ENCODE measurements at regions of chr7 and their contacts with region 1.

Region 1: GRCh38 chr7:94344826-94345225 is 49.9 kb upstream of the COL1A2 start:
- DNase-seq: no peak
- H3K4me3 ChIP-seq: no peak overlapping the region
- H3K27ac ChIP-seq: no peak overlapping the region
- H3K4me1 ChIP-seq: peaks cover 2% of the 10 kb centered on the region
- H3K27me3 ChIP-seq: no peaks in the 10 kb centered on the region
- CTCF ChIP-seq: no peak
- EP300 ChIP-seq: no peak
- POLR2A ChIP-seq: no peak

Region 2: DNA sequence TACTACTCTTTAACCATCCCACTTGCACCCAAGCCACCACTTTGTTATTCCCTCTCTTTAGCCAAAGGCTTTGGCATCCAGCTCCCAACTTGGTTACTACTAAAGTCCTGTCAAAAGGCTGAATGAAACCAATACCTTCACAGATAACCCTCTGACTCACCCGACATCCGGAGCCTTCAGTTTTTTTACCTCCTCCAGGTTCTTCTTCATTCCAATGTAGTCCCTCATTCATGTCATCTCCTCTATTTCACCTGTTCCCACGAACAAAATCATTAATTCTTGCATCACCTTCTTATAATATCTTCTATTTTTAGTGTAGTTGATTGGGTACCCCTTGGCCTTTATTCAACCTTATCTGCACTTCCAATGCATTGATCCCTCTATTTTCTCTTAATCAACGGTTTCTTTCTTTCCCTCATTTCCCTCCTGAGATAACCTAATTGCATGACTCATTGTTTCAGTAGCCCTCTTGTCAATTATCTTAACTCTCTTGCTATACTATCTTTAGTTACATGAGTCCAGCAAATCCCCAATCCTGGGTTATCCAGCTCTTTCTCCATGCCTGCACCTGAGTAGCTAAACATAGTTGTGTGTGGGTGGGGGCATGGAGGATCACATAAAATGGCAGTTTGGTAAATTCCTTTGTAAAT is 37.3 kb before region 1 on chr7:
- intact Hi-C with region 1: loop called in 1 of 4 experiments (anchors 5 kb)
- DNase-seq: no peak
- H3K4me3 ChIP-seq: no peak overlapping the region
- H3K27ac ChIP-seq: no peak overlapping the region
- H3K4me1 ChIP-seq: peaks cover 10% of the 10 kb centered on the region
- H3K27me3 ChIP-seq: no peaks in the 10 kb centered on the region
- CTCF ChIP-seq: no peak
- EP300 ChIP-seq: no peak
- POLR2A ChIP-seq: no peak

Region 3: GRCh38 chr7:94823952-94824351 is 479.1 kb after region 1 on chr7:
- intact Hi-C with region 1: no loop called
- DNase-seq: no peak
- H3K4me3 ChIP-seq: no peak overlapping the region
- H3K27ac ChIP-seq: no peak overlapping the region
- H3K4me1 ChIP-seq: no peaks in the 10 kb centered on the region
- H3K27me3 ChIP-seq: no peaks in the 10 kb centered on the region
- CTCF ChIP-seq: no peak
- EP300 ChIP-seq: no peak
- POLR2A ChIP-seq: no peak